Naive thymus-derived CD8-positive, alpha-beta T cell (primary cell): ENCODE measurements at regions of chr6 and their contacts with region 1.

Region 1: GRCh38 chr6:41027799-41028628 is 11.0 kb downstream of the UNC5CL start:
- DNase-seq: peak; percentile 36 to 82 (median 70)
- ATAC-seq: peak; percentile 86 to 89
- H3K4me3 Mint-ChIP-seq: peak overlapping the region; percentile 72 to 95 (median 88)
- H3K27ac Mint-ChIP-seq: peak overlapping the region; percentile 66 to 97 (median 86)
- H3K4me1 Mint-ChIP-seq: peaks cover 17 to 25% (median 23%) of the 10 kb centered on the region in 4 donors
- H3K27me3 Mint-ChIP-seq: no peaks in the 10 kb centered on the region

Region 2: DNA sequence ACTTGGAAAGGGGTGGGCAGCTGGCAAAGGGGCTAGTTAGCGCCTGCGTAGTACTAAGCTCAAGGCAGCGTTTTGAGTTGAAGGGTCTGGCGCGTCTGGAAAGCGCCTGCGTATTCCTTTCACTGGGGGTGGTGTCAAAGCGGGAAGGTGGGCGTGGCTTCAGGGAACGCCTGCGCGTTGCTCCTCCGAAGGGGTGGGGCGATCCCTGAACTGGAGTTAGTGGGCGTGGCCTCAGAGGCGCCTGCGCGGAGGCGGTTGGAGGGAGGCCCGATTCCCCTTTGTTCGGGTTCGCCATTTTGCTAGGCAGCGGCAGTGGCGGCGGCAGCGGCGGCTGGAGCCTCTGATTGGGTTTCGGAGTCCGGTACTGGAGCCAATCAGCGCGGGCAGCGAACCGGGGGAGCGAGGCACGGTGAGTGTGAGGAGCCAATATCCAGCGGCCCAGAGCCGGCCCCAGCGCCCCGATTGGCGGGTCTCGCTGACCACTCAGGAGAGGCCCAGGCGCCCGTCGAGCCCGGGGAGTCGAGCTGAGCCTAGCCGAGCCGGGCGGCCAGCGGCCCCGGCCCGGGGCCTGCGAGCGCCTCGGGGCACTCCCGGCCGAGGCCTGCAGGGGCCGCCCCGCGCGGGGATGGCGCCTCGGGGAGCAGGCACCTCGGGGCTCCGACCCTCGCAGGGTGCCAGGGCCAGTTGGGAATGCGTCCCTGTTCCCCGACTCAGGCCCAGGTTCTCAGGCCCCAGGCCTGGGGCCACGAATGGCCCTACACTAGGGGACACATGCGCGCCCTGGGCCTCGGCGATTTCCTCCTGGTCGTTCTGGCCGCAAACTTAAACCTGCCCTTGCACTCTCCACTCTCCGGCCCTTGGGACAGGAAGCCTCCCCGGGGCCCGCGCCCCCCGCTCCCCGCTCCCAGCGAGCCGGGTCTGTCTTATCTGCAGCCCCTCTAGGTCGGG is 44.9 kb after region 1 on chr6 and contains the start of gene NFYA:
- POLR2A ChIA-PET with region 1: interaction called, 10 read pairs
- DNase-seq: peak; percentile 99 to 100 (median 100)
- ATAC-seq: peak; percentile 69 to 72
- H3K4me3 Mint-ChIP-seq: peak within 1 kb of the TSS; percentile 93 to 98 (median 98)
- H3K27ac Mint-ChIP-seq: peak within 1 kb of the TSS; percentile 92 to 99 (median 98)
- H3K4me1 Mint-ChIP-seq: peaks cover 20 to 61% (median 52%) of the 10 kb centered on the region in 4 donors
- H3K27me3 Mint-ChIP-seq: peaks cover 0 to 4% (median 0%) of the 10 kb centered on the region in 5 donors
- polyA plus RNA-seq, gene NFYA: 17.0 to 27.9 (median 20.4) TPM

Region 3: GRCh38 chr6:41775293-41776181 is 747.5 kb after region 1 on chr6:
- POLR2A ChIA-PET with region 1: no interaction called
- DNase-seq: peak in 6 of 10 donors; percentile 18 to 46 (median 24)
- ATAC-seq: no peak
- H3K4me3 Mint-ChIP-seq: no peak overlapping the region
- H3K27ac Mint-ChIP-seq: no peak overlapping the region
- H3K4me1 Mint-ChIP-seq: peaks cover 6 to 18% (median 15%) of the 10 kb centered on the region in 4 donors
- H3K27me3 Mint-ChIP-seq: peaks cover 0 to 2% (median 0%) of the 10 kb centered on the region in 5 donors